Endothelial cell of umbilical vein (primary cell): ENCODE measurements at regions of chr10 and their contacts with region 1.

Region 1: GRCh38 chr10:103244663-103245271 is 920 bp upstream of the RPEL1 start:
- DNase-seq: peak; percentile 81
- H3K4me3 ChIP-seq: no peak overlapping the region
- H3K27ac ChIP-seq: no peak overlapping the region
- H3K4me1 ChIP-seq: peaks cover 8% of the 10 kb centered on the region
- H3K27me3 ChIP-seq: peaks cover 0 to 1% of the 10 kb centered on the region in 2 experiments
- CTCF ChIP-seq: peak; percentile 86 to 93
- POLR2A ChIP-seq: no peak

Region 2: GRCh38 chr10:102923601-102924000 is 321.2 kb before region 1 on chr10:
- CTCF ChIA-PET with region 1: interaction called, 211 read pairs
- POLR2A ChIA-PET with region 1: no interaction called
- dilution Hi-C with region 1: no loop called
- intact Hi-C with region 1: no loop called
- DNase-seq: no peak
- H3K4me3 ChIP-seq: no peak overlapping the region
- H3K27ac ChIP-seq: no peak overlapping the region
- H3K4me1 ChIP-seq: peaks cover 3% of the 10 kb centered on the region
- H3K27me3 ChIP-seq: peaks cover 10 to 13% of the 10 kb centered on the region in 2 experiments
- CTCF ChIP-seq: no peak
- POLR2A ChIP-seq: no peak

Region 3: GRCh38 chr10:103086799-103087198 is 158.0 kb before region 1 on chr10:
- CTCF ChIA-PET with region 1: interaction called, 39 read pairs
- POLR2A ChIA-PET with region 1: no interaction called
- dilution Hi-C with region 1: no loop called
- intact Hi-C with region 1: loop called (anchors 5 kb)
- DNase-seq: no peak
- H3K4me3 ChIP-seq: no peak overlapping the region
- H3K27ac ChIP-seq: no peak overlapping the region
- H3K4me1 ChIP-seq: no peaks in the 10 kb centered on the region
- H3K27me3 ChIP-seq: no peaks in the 10 kb centered on the region
- CTCF ChIP-seq: no peak
- POLR2A ChIP-seq: no peak

Region 4: DNA sequence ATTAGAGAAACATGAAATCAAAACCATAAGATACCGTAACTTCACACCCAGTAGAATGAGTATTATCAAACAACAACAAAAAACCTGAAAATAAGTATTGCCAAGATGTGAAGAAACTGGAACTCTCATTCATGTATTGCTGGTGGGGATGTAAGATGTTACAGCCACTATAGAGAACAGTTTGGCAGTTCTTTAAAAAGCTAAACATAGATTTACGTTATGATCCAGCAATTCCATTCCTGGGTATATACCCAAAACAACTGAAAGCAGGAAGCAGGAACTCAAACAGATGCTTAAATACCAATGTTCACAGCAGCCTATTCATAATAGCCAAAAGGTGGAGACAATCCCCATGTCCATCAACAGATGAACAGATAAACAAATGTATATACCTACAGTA is 124.2 kb before region 1 on chr10:
- CTCF ChIA-PET with region 1: interaction called, 40 read pairs
- POLR2A ChIA-PET with region 1: no interaction called
- dilution Hi-C with region 1: no loop called
- intact Hi-C with region 1: no loop called
- DNase-seq: no peak
- H3K4me3 ChIP-seq: no peak overlapping the region
- H3K27ac ChIP-seq: no peak overlapping the region
- H3K4me1 ChIP-seq: no peaks in the 10 kb centered on the region
- H3K27me3 ChIP-seq: no peaks in the 10 kb centered on the region
- CTCF ChIP-seq: no peak
- POLR2A ChIP-seq: no peak

Region 5: DNA sequence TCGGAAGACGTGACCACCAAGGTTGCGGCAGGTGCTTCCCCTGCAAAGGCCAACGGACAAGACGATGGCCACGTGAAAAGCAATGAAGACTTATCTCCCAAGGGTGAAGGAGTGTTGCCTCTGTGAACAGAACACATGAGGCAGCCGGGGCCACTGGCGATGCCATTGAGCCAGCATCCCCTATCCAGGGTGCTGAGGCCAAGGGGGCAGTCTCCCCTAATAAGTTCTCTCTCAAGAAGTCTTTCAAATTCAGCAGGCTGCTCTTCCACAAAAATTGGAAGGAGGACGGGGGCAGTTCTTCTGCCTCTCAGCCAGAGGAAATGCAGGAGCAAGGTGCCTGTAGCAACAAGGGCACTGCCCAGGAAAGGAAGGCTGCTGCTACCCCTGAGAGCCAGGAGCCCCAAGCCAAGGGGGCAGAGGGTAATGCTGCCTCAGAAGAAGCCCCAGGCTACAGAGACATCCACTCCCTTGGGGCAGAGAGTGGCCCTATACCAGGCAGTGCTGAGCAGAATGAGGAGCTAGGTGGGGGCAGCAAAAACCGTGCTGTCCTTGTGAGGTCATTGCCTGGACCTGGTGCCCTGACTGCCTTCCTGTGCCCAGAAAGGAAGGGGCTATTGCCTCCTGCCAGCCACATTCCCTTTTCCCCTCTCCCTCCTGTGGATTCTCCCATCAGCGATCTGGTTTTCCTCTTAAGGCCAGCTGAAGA is 69.0 kb before region 1 on chr10:
- CTCF ChIA-PET with region 1: interaction called, 35 read pairs
- POLR2A ChIA-PET with region 1: no interaction called
- dilution Hi-C with region 1: no loop called
- intact Hi-C with region 1: loop called (anchors 2 kb)
- DNase-seq: no peak
- H3K4me3 ChIP-seq: no peak overlapping the region
- H3K27ac ChIP-seq: no peak overlapping the region
- H3K4me1 ChIP-seq: peaks cover 12% of the 10 kb centered on the region
- H3K27me3 ChIP-seq: no peaks in the 10 kb centered on the region
- CTCF ChIP-seq: no peak
- POLR2A ChIP-seq: no peak

Region 6: GRCh38 chr10:103333925-103334520 is 89.3 kb after region 1 on chr10:
- CTCF ChIA-PET with region 1: interaction called, 15 read pairs
- POLR2A ChIA-PET with region 1: no interaction called
- dilution Hi-C with region 1: no loop called
- intact Hi-C with region 1: no loop called
- DNase-seq: peak; percentile 33
- H3K4me3 ChIP-seq: no peak overlapping the region
- H3K27ac ChIP-seq: no peak overlapping the region
- H3K4me1 ChIP-seq: no peaks in the 10 kb centered on the region
- H3K27me3 ChIP-seq: no peaks in the 10 kb centered on the region
- CTCF ChIP-seq: peak; percentile 23 to 47
- POLR2A ChIP-seq: no peak

Region 7: GRCh38 chr10:103417601-103418000 is 172.8 kb after region 1 on chr10:
- CTCF ChIA-PET with region 1: no interaction called
- POLR2A ChIA-PET with region 1: no interaction called
- dilution Hi-C with region 1: no loop called
- intact Hi-C with region 1: no loop called
- DNase-seq: no peak
- H3K4me3 ChIP-seq: no peak overlapping the region
- H3K27ac ChIP-seq: no peak overlapping the region
- H3K4me1 ChIP-seq: no peaks in the 10 kb centered on the region
- H3K27me3 ChIP-seq: no peaks in the 10 kb centered on the region
- CTCF ChIP-seq: no peak
- POLR2A ChIP-seq: no peak